Motor neuron (in vitro differentiated cells): ENCODE measurements at regions of chr11 and their contacts with region 1.

Region 1: GRCh38 chr11:44911029-44911814 is 39.5 kb downstream of the TP53I11 start:
- ATAC-seq: peak; percentile 78 to 88 (median 84)
- H3K4me3 ChIP-seq: no peak overlapping the region
- H3K27ac ChIP-seq: peak overlapping the region; percentile 13 to 54
- H3K4me1 ChIP-seq: peaks cover 26 to 29% of the 10 kb centered on the region in 2 donors

Region 2: DNA sequence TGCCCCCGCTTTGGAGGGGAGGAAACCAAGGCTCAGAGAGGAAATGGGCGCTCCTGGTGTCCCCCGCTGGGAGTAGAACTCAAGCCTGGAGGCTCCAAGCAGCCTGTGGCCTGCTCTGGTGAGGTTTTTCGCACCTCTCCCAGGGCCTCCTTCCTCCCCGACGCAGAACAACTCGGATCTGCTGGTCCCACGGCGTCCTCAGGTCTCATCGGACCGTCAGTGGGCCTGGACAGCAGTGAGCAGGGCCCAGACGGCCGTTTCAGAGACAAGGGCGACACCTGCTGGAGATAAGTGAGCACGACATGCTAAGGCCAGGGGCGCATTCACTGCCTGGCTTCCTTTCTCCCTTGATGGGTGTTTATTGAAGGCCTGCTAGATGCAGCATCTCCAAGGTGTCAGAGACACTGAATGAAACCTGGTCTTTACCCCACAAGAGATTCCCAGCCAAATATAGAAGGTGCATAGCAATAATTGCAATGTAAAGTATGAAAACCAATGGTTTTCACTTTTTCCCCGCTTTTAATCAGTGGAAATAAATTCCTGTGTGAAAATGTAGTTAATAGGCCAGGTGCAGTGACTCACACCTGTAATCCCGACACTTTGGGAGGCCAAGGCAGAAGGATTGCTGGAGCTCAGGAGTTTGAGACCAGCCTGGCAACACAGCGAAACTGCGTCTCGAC is 372.7 kb before region 1 on chr11:
- in situ Hi-C with region 1: no loop called
- ATAC-seq: peak; percentile 40 to 98 (median 96)
- H3K4me3 ChIP-seq: no peak overlapping the region
- H3K27ac ChIP-seq: no peak overlapping the region
- H3K4me1 ChIP-seq: peaks cover 0 to 3% of the 10 kb centered on the region in 2 donors

Region 3: DNA sequence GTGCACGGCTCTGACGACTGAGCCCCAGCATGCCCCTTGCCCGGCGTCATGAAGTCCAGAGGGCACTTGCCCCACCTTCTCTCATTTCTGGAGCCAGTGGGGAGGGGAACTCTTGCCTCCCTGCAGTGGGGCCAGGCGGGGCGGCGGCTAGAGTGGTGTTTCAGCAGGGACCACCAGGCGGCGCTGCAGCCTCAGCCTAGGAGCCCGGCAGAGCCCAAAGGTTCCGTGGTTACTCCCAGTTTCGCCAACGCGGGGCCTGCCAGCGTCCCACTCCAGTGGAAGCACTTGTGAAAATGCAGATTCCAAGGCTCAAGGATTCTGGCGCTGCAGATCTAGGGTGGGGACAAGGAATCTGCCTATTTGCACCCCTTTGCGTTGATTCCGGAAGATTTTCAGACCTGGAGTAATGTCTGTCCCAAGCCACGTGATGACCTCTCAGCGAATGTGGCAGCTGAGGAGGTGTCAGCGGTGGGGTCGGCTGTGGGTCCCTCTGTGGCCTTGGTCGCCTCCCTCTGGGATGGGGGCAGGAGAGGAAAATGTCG is 290.0 kb before region 1 on chr11:
- in situ Hi-C with region 1: loop called in 8 of 9 experiments (anchors 10 to 25 kb)
- ATAC-seq: peak; percentile 71 to 85 (median 80)
- H3K4me3 ChIP-seq: no peak overlapping the region
- H3K27ac ChIP-seq: no peak overlapping the region
- H3K4me1 ChIP-seq: peaks cover 3 to 6% of the 10 kb centered on the region in 2 donors

Region 4: GRCh38 chr11:44627911-44628729 is 283.1 kb before region 1 on chr11:
- in situ Hi-C with region 1: loop called (anchors 10 to 25 kb)
- ATAC-seq: peak; percentile 76 to 96 (median 82)
- H3K4me3 ChIP-seq: no peak overlapping the region
- H3K27ac ChIP-seq: peak overlapping the region in 1 of 2 donors; percentile 44
- H3K4me1 ChIP-seq: peaks cover 20 to 21% of the 10 kb centered on the region in 2 donors

Region 5: DNA sequence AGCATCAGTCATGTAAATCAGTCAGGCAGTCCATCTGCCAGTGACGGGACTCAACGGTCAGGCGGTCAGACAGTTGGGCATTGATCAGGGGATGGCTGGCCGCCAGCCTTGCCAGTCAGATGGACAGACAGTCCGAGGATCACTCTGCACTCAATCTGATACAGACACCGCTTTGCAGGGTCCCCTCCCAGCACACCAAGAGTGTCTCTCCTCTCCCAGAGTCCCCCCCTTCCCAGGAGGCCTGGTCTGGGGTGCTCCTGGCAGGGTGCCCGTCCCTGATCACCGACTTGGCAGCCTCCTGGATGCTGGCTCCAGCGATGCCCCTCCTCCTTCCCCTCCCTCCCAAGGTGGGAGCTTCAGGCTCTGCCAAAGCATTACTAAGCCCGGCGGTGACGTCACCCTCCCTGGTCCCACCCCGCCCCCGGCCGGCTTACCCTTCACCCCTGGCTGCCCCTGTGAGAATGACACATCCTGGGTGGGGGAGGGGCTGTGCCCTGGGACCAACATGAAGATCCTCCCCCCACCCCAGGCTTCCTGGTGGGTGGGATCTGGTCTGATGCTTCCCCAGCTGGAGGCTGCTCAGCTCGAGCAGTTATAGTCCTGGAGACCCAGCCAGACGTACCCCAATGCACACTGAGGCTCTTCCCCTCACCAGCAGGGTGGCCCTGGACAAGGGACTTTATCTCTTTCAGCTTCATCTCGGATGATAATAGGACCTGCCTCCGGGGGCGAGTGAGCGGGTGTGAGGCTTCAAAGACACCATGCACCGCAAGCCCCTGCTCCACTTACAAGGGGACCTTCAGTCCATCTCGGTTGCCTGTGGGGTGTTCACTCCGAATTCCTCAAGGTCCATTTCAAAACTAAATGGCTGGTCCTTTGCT is 276.6 kb before region 1 on chr11:
- in situ Hi-C with region 1: loop called in 7 of 9 experiments (anchors 10 to 25 kb)
- ATAC-seq: peak; percentile 81 to 97 (median 96)
- H3K4me3 ChIP-seq: no peak overlapping the region
- H3K27ac ChIP-seq: peak overlapping the region; percentile 11 to 52
- H3K4me1 ChIP-seq: peaks cover 14 to 15% of the 10 kb centered on the region in 2 donors